ENCODE measurements at regions of chr19 and their contacts with region 1.

Region 1: DNA sequence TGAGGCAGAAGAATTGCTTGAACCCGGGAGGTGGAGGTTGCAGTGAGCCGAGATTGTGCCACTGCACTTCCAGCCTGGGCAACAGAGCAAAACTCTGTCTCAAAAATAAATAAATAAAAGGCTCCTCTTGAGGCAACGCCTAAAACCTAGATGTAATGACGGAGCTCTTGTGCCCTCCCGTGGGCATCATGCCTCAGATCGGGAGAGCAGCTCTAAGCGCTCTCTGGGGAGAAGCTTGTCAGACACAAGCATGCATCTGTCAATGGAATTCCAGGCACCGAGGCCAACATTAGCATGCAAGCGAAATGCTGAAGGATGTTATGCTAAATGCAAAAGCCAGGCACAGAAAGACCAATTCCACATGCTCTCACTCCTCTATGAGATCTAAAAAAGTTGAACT is 45.6 kb upstream of the MRI1 start:
- DNase-seq: peak; percentile 52
- H3K4me3 Mint-ChIP-seq: no peak overlapping the region
- H3K27ac Mint-ChIP-seq: no peak overlapping the region
- H3K4me1 Mint-ChIP-seq: no peaks in the 10 kb centered on the region
- H3K27me3 Mint-ChIP-seq: no peaks in the 10 kb centered on the region
- CTCF ChIP-seq: peak; percentile 59

Region 2: DNA sequence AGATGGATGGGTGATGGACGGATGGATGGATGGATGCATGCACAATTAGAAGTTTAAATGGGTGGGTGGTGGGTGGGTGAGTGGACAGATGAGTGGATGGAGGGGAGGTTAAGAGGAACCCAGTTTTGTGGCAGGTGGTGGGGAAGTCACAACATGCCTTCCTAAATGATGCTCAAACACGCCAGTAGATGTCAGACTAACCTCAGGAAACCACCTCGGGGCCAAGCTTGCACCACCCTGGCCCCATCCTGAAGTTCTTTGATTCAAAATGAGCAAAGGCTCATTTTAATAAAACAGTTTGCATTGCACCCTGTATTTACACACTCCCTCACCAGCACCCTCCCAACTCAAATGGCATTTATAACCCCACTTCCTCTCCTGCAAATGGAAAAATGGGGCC is 121.1 kb before region 1 on chr19:
- CTCF ChIA-PET with region 1: interaction called, 161 read pairs
- POLR2A ChIA-PET with region 1: interaction called, 10 read pairs
- intact Hi-C with region 1: loop called (anchors 1 kb)
- DNase-seq: peak; percentile 75
- H3K4me3 Mint-ChIP-seq: no peak overlapping the region
- H3K27ac Mint-ChIP-seq: peak overlapping the region; percentile 44
- H3K4me1 Mint-ChIP-seq: no peaks in the 10 kb centered on the region
- H3K27me3 Mint-ChIP-seq: peaks cover 50% of the 10 kb centered on the region
- CTCF ChIP-seq: peak; percentile 78

Region 3: DNA sequence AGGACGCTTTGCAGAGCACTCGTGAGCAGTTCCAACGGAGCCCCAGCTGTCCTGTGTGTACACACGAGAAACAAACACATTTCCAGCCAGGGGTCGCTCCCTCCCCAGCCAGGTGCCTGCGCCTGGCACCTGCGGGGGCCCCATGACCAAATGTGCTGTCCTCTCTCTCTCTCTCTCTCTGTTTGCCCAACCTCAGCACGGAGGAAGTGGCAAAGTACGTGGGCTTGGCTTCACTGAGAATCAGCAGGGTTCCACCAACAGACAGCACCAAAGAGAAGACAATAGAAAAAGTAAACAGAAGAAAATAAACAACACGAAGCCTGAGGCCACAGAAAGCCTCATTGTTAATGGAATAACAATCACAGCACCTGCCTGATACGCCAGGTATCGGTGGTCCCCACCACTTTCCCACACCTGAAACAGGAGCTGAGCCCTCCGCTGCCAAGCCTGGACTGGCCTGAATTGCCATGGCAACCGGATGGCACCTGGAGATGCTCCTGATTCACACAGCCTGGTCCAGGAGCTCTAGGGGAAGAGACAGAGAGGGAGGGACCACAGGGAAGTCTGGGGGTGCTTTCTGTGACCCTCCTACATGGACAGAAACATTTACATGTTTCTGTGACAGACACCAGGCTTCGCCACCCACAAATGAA is 108.6 kb before region 1 on chr19:
- CTCF ChIA-PET with region 1: interaction called, 10 read pairs
- POLR2A ChIA-PET with region 1: interaction called, 5 read pairs
- intact Hi-C with region 1: no loop called
- DNase-seq: no peak
- H3K4me3 Mint-ChIP-seq: no peak overlapping the region
- H3K27ac Mint-ChIP-seq: peak overlapping the region; percentile 11
- H3K4me1 Mint-ChIP-seq: peaks cover 8% of the 10 kb centered on the region
- H3K27me3 Mint-ChIP-seq: peaks cover 3% of the 10 kb centered on the region
- CTCF ChIP-seq: no peak

Region 4: DNA sequence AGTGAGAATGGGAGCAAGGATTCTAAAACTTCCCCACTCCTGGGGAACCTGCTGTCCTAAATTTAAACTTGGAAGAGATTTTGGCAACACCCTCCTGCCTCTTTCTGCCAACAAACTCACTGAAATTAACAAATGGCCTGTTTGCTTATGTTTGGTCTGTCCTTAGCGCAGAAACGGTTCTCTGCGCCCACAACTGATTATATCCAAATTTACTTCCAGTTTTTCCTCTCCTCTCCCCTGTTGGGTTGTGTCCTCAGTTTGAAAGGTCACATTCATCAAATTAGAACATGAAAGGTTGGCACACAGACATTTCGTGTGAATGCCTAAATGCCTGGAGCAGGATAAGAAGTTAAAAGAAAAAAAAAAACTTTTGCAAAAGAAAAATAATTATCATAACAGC is 10.8 kb before region 1 on chr19:
- CTCF ChIA-PET with region 1: interaction called, 14 read pairs
- POLR2A ChIA-PET with region 1: interaction called, 3 read pairs
- intact Hi-C with region 1: no loop called
- DNase-seq: no peak
- H3K4me3 Mint-ChIP-seq: no peak overlapping the region
- H3K27ac Mint-ChIP-seq: no peak overlapping the region
- H3K4me1 Mint-ChIP-seq: peaks cover 4% of the 10 kb centered on the region
- H3K27me3 Mint-ChIP-seq: no peaks in the 10 kb centered on the region
- CTCF ChIP-seq: no peak

Region 5: DNA sequence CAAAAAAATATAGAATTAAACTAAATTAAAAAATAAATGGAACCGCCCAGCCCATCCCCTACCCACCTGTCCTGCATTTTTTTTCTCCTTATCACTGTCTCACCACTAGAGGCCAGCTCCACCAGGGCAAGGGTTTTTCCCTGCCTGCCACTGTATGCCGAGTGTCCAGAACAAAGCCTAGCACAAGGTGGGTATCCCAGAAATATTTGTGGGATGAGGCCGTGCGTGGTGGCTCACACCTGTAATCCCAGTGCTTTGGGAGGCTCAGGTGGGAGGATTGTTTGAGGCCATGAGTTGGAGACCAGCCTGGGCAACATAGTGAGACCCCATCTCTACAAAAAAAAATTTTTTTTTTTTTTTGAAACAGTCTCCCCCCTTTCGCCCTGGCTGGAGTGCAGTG is 42.6 kb after region 1 on chr19:
- CTCF ChIA-PET with region 1: no interaction called
- POLR2A ChIA-PET with region 1: no interaction called
- intact Hi-C with region 1: no loop called
- DNase-seq: no peak
- H3K4me3 Mint-ChIP-seq: no peak overlapping the region
- H3K27ac Mint-ChIP-seq: no peak overlapping the region
- H3K4me1 Mint-ChIP-seq: peaks cover 17% of the 10 kb centered on the region
- H3K27me3 Mint-ChIP-seq: no peaks in the 10 kb centered on the region
- CTCF ChIP-seq: no peak

Measured in MCF 10A (cell line).